ENCODE measurements at regions of chr9 and their contacts with region 1.

Region 1: DNA sequence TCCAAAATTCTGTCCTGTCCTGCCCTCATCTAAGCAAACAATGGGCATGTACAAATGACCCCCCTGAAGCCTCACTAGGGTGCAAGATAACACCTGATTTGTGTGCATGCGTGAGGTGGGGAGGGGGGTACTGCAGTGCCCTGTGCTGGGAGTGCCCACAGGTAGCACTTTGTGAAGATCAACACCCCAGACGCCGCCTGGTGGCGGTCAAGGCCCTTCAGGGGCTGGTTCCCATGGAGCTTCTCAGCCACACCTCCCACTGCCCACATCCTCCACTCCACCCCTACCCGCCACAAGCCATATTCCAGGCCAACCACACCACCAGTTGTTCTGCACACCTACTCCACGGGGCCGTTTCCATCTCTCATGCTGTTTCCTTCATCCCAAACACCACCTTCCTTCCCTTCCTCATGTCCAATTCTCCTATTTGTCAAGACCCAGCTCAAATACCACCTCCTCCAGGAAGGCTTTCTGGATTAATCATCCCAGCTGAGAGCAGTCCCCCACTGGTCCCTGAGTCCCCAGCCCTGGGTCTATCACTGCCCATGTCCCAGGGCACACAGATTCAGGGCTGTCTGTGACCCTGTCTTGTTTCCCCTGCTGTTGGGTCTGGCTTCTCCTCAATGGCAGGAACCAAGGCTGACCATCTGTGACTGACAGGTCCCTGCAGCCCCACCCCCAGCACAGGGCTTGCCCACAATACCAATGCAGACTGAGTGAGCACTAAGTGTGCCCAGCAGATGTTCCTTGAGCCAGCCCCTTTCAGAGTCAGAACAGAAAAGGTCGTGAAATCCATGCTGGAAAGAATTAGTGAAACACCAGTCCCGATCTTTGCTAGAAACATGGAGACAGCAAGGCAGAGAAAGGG is 178.4 kb downstream of the PAX5 start:
- DNase-seq: peak; percentile 61
- ATAC-seq: peak; percentile 100
- H3K4me3 ChIP-seq: no peak overlapping the region
- H3K27ac ChIP-seq: no peak overlapping the region
- H3K4me1 ChIP-seq: peaks cover 0 to 9% of the 10 kb centered on the region in 2 experiments; a peak in 1 of 4 replicates
- H3K27me3 ChIP-seq: no peaks in the 10 kb centered on the region; the same call in 1 of the 2 replicates
- CTCF ChIP-seq: peak; percentile 43 to 72 (median 69); a peak in 4 of 6 replicates
- POLR2A ChIP-seq: no peak
- RAD21 ChIP-seq: peak; percentile 62

Region 2: DNA sequence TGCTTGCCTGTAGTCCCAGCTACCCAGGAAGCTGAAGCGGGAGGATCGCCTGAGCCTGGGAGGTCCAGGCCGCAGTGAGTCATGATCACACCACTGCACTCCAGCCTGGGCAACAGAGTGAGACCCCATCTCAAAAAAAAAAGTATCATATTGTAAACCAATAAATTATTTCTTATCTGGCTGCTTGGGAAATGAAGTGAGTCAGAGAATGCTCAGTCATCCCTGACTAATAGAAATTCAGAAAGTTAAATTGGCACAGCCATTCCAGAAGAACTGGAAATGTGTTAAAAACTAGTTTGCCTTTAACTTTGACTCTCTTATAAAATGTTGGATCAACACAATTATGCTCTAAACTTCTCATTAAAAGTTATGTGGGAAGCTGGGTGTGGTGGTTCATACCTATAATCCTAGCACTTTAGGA is 587.7 kb before region 1 on chr9:
- CTCF ChIA-PET with region 1: no interaction called
- POLR2A ChIA-PET with region 1: no interaction called
- RAD21 ChIA-PET with region 1: no interaction called
- intact Hi-C with region 1: no loop called
- DNase-seq: no peak
- ATAC-seq: no peak
- H3K4me3 ChIP-seq: no peak overlapping the region
- H3K27ac ChIP-seq: no peak overlapping the region
- H3K4me1 ChIP-seq: peaks cover 0 to 8% of the 10 kb centered on the region in 2 experiments; a peak in 1 of 4 replicates
- H3K27me3 ChIP-seq: no peaks in the 10 kb centered on the region
- CTCF ChIP-seq: no peak
- POLR2A ChIP-seq: no peak
- RAD21 ChIP-seq: no peak

Region 3: DNA sequence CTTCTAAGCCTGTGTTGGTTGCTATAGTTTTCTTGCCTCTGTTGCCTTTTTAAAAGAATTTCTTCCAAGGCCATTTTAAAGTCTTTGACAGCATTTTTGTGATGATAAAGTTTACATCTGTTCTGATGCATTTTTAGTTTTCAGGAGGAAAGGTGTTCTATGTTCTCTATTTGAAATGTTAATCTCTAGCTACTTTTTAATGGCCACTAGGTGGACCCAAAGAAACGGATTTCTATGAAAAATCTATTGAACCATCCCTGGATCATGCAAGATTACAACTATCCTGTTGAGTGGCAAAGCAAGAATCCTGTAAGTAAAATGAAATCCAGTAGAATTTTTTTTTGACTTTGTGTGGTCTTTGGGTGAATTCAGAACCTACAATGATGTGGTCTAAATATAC is 222.8 kb before region 1 on chr9:
- CTCF ChIA-PET with region 1: interaction called, 3 read pairs
- POLR2A ChIA-PET with region 1: no interaction called
- RAD21 ChIA-PET with region 1: no interaction called
- intact Hi-C with region 1: loop called (anchors 2 kb)
- DNase-seq: peak; percentile 7
- ATAC-seq: peak; percentile 70
- H3K4me3 ChIP-seq: no peak overlapping the region
- H3K27ac ChIP-seq: no peak overlapping the region
- H3K4me1 ChIP-seq: no peaks in the 10 kb centered on the region
- H3K27me3 ChIP-seq: no peaks in the 10 kb centered on the region
- CTCF ChIP-seq: peak; percentile 43 to 72 (median 47); a peak in 5 of 6 replicates
- POLR2A ChIP-seq: no peak
- RAD21 ChIP-seq: peak; percentile 58

Region 4: DNA sequence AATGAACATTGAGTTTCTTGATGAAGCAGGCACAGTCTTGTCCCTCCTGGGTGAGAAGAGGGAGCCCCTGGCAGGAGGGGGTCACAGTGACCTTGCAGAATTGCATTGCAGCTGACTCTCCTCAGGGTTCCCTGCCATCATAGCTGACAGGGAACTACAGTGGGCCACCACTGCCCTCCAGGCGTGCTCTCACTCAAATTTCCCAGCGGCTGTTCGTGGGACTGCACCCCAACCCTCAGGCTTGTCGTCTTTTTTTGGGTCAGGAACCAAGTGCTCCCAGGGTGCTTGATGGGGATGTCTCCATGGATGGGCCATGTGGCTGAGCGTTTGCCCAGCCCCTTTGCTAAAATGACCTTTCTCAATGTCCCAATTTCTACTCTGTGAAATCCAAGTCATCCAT is 67.1 kb before region 1 on chr9:
- CTCF ChIA-PET with region 1: no interaction called
- POLR2A ChIA-PET with region 1: no interaction called
- RAD21 ChIA-PET with region 1: no interaction called
- intact Hi-C with region 1: no loop called
- DNase-seq: peak; percentile 23
- ATAC-seq: peak; percentile 97
- H3K4me3 ChIP-seq: no peak overlapping the region
- H3K27ac ChIP-seq: no peak overlapping the region
- H3K4me1 ChIP-seq: no peaks in the 10 kb centered on the region
- H3K27me3 ChIP-seq: no peaks in the 10 kb centered on the region
- CTCF ChIP-seq: peak; percentile 14 to 69 (median 65); a peak in 5 of 6 replicates
- POLR2A ChIP-seq: no peak
- RAD21 ChIP-seq: no peak

Measured in HCT116 (cell line).